ENCODE measurements at regions of chr18 and their contacts with region 1.

Region 1: GRCh38 chr18:56563568-56563967 is 74.8 kb downstream of the TXNL1 start:
- ATAC-seq: peak in 1 of 8 experiments; percentile 26
- H3K4me3 ChIP-seq: no peak overlapping the region
- H3K27ac ChIP-seq: no peak overlapping the region
- H3K4me1 ChIP-seq: peaks cover 0 to 5% of the 10 kb centered on the region in 2 donors

Region 2: DNA sequence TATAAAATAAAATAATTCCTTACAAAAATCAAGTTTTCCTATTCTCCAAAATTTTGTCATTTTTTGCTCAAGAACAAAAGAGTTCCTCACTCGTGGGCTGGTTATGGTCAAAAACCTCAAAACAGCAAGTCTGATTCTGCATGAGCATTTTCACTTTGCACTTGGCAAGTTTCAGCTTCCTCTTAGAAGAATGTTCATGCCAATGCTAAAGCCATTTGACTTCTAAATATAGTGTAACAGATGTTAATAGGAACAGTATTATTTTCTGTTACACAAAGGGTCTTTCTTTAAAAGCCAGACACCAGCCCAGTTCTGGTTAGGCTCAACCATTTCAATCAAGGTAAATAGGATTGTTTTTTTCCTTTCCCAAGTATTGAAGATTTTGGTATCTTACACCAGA is 1343.0 kb before region 1 on chr18:
- in situ Hi-C with region 1: loop called in 4 of 9 experiments (anchors 25 kb)
- ATAC-seq: no peak
- H3K4me3 ChIP-seq: no peak overlapping the region
- H3K27ac ChIP-seq: no peak overlapping the region
- H3K4me1 ChIP-seq: peaks cover 2 to 17% of the 10 kb centered on the region in 2 donors

Region 3: GRCh38 chr18:55234366-55235093 is 1329.0 kb before region 1 on chr18:
- in situ Hi-C with region 1: loop called in 3 of 9 experiments (anchors 25 kb)
- ATAC-seq: peak; percentile 77 to 92 (median 84)
- H3K4me3 ChIP-seq: no peak overlapping the region
- H3K27ac ChIP-seq: no peak overlapping the region
- H3K4me1 ChIP-seq: peaks cover 0 to 2% of the 10 kb centered on the region in 2 donors

Region 4: GRCh38 chr18:56358608-56359280 is 204.8 kb before region 1 on chr18:
- in situ Hi-C with region 1: loop called in 3 of 9 experiments (anchors 25 kb)
- ATAC-seq: peak in 2 of 8 experiments; percentile 25 to 37
- H3K4me3 ChIP-seq: no peak overlapping the region
- H3K27ac ChIP-seq: no peak overlapping the region
- H3K4me1 ChIP-seq: no peaks in the 10 kb centered on the region

Region 5: DNA sequence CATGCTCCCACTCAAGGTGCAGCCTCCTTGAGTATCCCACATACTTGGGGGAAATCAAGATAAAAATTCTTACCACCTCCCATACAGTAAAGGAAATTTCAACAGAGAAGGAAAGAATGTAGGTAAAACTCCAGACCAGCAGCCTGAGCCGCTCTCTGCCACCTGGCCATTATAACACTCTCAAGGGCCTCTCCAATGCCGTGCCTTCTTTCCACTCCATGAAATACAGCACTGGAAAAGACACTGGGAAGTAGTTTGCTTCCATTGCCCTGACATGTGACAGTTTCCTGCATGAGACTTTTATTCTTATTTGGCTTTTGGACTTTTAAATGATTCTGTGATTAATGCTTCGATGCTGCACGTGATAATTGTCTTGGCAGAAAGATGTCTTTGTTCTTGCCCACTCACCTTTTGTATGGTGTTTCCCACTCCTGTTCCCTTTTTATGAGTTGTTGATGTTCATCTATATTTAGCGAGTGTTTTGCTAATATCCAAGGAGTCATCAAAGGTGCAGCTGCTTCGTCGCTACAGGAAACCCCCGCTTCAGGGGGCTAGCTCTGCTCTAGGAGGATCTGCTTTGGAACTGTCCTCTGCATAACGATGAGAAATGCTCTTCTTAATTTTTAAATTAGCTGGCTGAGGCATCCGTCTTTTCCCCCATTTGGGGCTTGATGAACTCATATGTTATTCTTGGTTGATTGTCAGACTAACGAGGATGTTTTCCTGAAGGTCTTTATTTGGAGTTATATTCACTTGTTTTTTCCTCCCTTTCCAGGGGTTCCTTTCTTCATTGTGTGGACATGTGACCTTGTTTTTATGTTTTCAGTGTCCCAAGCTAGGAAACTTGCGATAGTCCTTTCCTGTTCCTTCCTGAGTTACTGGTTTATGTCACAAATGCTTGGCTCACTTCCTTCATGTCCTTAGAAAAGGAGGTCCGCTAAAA is 104.5 kb before region 1 on chr18:
- in situ Hi-C with region 1: no loop called
- ATAC-seq: peak in 3 of 8 experiments; percentile 16 to 60 (median 57)
- H3K4me3 ChIP-seq: no peak overlapping the region
- H3K27ac ChIP-seq: no peak overlapping the region
- H3K4me1 ChIP-seq: peaks cover 0 to 2% of the 10 kb centered on the region in 2 donors

Region 6: GRCh38 chr18:56475250-56475649 is 88.3 kb before region 1 on chr18:
- in situ Hi-C with region 1: no loop called
- ATAC-seq: peak in 4 of 8 experiments; percentile 26 to 60 (median 42)
- H3K4me3 ChIP-seq: no peak overlapping the region
- H3K27ac ChIP-seq: no peak overlapping the region
- H3K4me1 ChIP-seq: peaks cover 0 to 5% of the 10 kb centered on the region in 2 donors

Region 7: DNA sequence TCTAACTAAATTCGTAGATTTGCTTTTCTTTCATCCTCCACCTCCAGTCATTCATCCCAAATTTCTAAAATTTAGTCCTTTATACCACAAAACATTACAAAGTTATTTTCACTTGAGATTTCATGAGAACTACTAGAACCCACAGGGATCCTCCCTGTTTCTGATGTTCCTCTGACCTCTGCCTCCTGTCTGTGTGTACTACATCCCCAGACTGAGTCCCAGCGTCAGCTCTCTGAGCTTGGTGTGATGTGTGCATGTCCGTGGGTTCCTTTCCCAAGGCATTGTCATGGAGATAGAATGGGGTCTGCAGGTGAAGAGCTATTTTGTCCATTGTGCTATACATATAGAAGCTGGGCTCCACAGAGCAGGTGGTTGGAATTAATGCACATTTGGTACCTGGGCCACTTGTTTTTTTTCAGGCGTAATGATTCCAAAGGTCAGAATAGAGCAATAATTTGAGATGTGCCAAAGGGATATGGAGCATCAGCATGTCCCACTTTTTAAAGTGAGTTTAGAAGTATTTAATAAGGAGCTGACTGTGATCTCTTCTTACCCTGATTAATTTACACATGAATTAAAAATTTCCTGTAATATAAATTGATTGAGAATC is 432.1 kb after region 1 on chr18:
- in situ Hi-C with region 1: no loop called
- ATAC-seq: peak in 1 of 8 experiments; percentile 49
- H3K4me3 ChIP-seq: no peak overlapping the region
- H3K27ac ChIP-seq: no peak overlapping the region
- H3K4me1 ChIP-seq: peaks cover 0 to 4% of the 10 kb centered on the region in 2 donors